ENCODE measurements at regions of chr1 and their contacts with region 1.

Region 1: DNA sequence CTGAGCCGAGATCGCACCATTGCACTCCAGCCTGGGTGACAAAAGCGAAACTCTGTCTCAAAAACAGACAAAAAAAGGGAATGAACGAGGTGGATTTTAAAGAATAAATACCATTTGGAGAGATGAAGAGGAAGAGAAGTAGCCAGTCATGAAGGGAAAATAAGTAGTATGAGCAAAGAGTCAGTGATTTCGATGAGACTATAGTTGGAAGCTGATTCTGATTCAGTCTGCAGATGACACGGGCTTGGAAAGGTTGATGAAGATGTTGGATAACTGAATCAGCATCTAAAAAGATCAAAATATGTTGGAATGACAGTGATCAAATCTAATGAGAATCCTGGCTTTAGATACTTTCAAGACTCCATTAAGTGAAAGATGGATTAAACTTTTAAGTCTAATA is 23.8 kb downstream of the MACF1 start:
- DNase-seq: no peak
- H3K4me3 ChIP-seq: no peak overlapping the region
- H3K27ac ChIP-seq: no peak overlapping the region
- H3K4me1 ChIP-seq: peaks cover 6 to 22% (median 17%) of the 10 kb centered on the region in 4 experiments
- H3K27me3 ChIP-seq: no peaks in the 10 kb centered on the region
- CTCF ChIP-seq: no peak
- EP300 ChIP-seq: no peak
- POLR2A ChIP-seq: no peak
- RAD21 ChIP-seq: no peak

Region 2: GRCh38 chr1:39214998-39215873 is 13.0 kb before region 1 on chr1:
- CTCF ChIA-PET with region 1: interaction called, 17 read pairs
- POLR2A ChIA-PET with region 1: interaction called, 7 read pairs
- DNase-seq: peak in 1 of 2 experiments; percentile 47
- H3K4me3 ChIP-seq: no peak overlapping the region
- H3K27ac ChIP-seq: no peak overlapping the region
- H3K4me1 ChIP-seq: peaks cover 10 to 23% (median 13%) of the 10 kb centered on the region in 4 experiments
- H3K27me3 ChIP-seq: no peaks in the 10 kb centered on the region
- CTCF ChIP-seq: no peak
- EP300 ChIP-seq: no peak
- POLR2A ChIP-seq: no peak
- RAD21 ChIP-seq: no peak

Region 3: GRCh38 chr1:39238476-39238875 is 10.2 kb after region 1 on chr1:
- CTCF ChIA-PET with region 1: interaction called, 11 read pairs
- POLR2A ChIA-PET with region 1: interaction called, 3 read pairs
- DNase-seq: no peak
- H3K4me3 ChIP-seq: no peak overlapping the region
- H3K27ac ChIP-seq: no peak overlapping the region
- H3K4me1 ChIP-seq: no peaks in the 10 kb centered on the region
- H3K27me3 ChIP-seq: no peaks in the 10 kb centered on the region
- CTCF ChIP-seq: no peak
- EP300 ChIP-seq: no peak
- POLR2A ChIP-seq: no peak
- RAD21 ChIP-seq: no peak

Measured in H1 (cell line).